Mammary epithelial cell (primary cell): ENCODE measurements at regions of chr12 and their contacts with region 1.

Region 1: DNA sequence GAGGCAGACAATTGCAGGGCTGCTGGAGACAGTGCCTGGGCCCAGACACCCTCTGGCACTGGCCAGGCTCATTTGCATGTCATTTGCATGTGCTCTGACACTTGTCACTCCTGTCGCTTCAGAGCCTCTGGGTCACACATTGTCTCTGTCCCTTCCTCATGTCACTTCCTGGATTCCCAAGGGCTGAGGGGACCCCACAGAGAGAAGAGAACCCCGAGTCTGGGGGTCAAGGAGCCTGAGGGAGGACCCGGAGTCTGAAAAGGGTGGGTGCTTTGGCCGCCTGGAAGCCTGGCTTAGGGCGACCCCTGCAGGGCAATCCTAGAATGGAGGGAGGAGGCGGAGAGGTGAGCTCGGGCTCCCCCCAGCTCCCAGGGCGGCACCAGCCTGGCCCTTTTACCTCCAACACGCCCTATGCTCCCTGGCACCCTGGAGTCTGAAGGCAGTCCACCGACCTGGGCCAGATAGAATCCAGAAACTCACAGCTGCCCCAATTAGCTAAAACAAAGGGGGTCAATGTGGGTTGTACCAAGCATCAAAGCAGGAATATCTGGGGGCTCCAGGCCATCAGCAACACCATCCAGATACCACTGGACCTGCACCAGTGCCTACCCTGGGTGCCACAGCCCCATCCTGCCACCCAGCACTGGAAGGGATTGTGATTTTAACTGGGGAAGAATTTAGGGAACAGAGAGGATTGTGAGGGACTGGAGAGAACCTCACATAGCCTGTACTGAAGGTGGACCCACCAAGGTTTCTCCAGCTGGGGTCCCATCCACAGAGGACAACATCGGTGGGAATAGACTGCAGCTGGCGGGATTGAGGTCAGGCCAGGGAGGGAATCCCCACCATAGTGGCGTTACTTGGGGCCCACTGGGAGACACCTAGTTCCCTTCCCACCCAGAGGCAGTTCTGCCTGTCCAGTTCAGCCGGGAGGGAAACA is 21.8 kb upstream of the KRT78 start:
- DNase-seq: peak; percentile 52
- H3K4me3 ChIP-seq: no peak overlapping the region
- H3K27ac ChIP-seq: peak overlapping the region; percentile 67
- H3K4me1 ChIP-seq: peaks cover 59% of the 10 kb centered on the region
- H3K27me3 ChIP-seq: no peaks in the 10 kb centered on the region
- CTCF ChIP-seq: peak; percentile 57 to 74

Region 2: DNA sequence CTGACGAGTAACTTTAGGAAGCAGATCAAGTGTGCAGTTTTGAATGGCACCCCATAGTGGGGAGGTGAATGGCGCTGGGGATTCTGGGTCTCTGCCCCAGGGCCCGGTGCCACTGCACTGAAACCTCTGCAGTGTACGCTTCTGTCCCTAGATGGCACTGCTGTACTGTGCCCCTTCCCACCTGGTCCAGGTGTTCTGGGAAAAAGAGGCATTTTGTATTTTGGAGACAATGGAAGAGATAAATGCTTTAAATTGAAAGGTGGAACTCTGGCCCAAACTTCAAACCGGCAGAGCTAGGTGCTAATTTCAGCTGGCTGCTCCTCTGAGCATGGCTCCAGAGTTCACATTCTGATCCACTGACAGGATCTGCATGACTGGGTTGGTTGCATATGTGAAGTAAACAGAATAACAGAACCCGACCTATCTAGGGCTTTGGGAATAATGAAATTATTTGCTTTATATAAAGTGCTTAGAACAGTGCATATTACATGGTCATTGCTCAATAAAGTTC is 731.0 kb before region 1 on chr12:
- CTCF ChIA-PET with region 1: no interaction called
- dilution Hi-C with region 1: no loop called
- in situ Hi-C with region 1: loop called in 1 of 2 experiments (anchors 5 kb)
- intact Hi-C with region 1: loop called (anchors 2 kb)
- DNase-seq: peak; percentile 53
- H3K4me3 ChIP-seq: no peak overlapping the region
- H3K27ac ChIP-seq: no peak overlapping the region
- H3K4me1 ChIP-seq: peaks cover 15% of the 10 kb centered on the region
- H3K27me3 ChIP-seq: no peaks in the 10 kb centered on the region
- CTCF ChIP-seq: peak; percentile 98